AG04449 (cell line): ENCODE measurements at regions of chr14 and their contacts with region 1.

Region 1: GRCh38 chr14:22221508-22221907 is 367.5 kb downstream of the DAD1 start:
- DNase-seq: no peak
- H3K4me3 ChIP-seq: no peak overlapping the region
- CTCF ChIP-seq: peak; percentile 22

Region 2: GRCh38 chr14:22271838-22272799 is 50.6 kb after region 1 on chr14:
- CTCF ChIA-PET with region 1: interaction called, 10 read pairs
- POLR2A ChIA-PET with region 1: no interaction called
- DNase-seq: no peak
- H3K4me3 ChIP-seq: no peak overlapping the region
- CTCF ChIP-seq: no peak

Region 3: GRCh38 chr14:22319526-22320361 is 98.2 kb after region 1 on chr14:
- CTCF ChIA-PET with region 1: interaction called, 23 read pairs
- POLR2A ChIA-PET with region 1: no interaction called
- DNase-seq: no peak
- H3K4me3 ChIP-seq: no peak overlapping the region
- CTCF ChIP-seq: peak; percentile 57

Region 4: GRCh38 chr14:22380571-22381407 is 159.3 kb after region 1 on chr14:
- CTCF ChIA-PET with region 1: interaction called, 35 read pairs
- POLR2A ChIA-PET with region 1: no interaction called
- DNase-seq: no peak
- H3K4me3 ChIP-seq: peak overlapping the region; percentile 26
- CTCF ChIP-seq: no peak